ENCODE measurements at regions of chr15 and their contacts with region 1.

Region 1: GRCh38 chr15:72033711-72034110 is 84.2 kb downstream of the MYO9A start:
- DNase-seq: no peak

Region 2: DNA sequence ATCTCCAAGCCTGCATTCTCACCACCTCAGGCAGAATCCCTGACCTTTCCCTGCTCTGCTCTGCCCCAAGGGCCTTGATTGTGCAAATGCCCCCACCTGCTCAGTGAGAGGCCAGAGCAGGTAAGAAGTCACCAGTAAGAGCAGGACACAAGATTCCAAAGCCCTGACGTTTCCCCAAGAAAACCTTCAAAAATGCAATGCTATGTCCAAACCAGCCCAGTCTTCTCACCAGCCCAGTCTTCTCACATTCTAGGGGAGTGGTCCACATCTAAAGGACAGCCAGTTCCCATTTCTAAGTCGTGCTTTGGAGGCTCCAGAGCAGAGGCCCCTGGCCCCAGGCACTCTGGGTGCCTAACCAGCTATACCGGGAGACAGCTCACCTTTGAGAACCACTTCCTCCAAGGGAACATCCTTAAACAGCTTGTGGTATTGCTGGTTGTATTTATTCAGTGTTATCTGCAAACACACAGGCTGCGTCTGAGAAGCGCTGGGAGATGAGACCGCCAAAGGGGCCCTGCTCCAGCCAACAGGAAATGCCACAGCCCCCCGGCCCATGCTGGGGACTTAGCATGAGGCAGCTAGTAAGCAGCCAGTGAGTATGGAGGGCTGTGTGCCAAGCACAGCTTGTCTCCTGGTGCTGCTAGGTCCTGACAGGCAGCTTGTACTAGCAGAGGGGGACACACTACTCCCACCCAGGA is 134.5 kb after region 1 on chr15:
- intact Hi-C with region 1: no loop called
- DNase-seq: no peak

Region 3: GRCh38 chr15:72579814-72580213 is 546.1 kb after region 1 on chr15:
- intact Hi-C with region 1: loop called in 1 of 2 experiments (anchors 5 kb)
- DNase-seq: no peak

Measured in posterior vena cava (tissue), 2 donors.